ENCODE measurements at regions of chr2 and their contacts with region 1.

Region 1: DNA sequence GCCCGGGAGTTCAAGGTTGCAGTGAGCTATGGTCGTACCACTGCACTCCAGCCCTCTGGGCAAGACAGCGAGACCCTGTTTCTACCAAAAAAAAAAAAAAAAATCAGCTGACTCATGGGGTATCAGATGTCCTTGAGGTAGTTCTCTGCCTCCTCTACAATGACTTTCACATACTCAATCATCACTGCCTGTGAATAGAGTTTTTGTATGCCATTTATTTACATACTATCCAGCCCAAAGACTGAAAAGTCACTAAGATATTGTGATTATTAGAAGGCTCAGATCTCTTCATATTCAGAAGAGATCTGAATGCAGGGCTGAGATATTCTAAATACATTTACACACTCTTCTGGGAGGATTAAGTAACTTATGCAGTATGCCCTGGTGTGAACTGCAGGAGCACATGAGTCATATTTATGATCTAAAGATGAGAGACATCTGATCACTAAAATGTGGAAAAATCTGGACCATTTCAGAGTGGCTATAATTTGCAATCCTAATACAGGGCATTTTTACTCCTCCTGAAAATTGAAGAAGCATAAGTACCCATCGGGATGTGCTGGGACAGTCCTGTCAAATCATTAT is 38.9 kb downstream of the KLF7 start:
- DNase-seq: no peak
- ATAC-seq: no peak
- H3K4me3 ChIP-seq: no peak overlapping the region
- H3K4me3 Mint-ChIP-seq: no peak overlapping the region
- H3K27ac ChIP-seq: no peak overlapping the region
- H3K27ac Mint-ChIP-seq: no peak overlapping the region
- H3K4me1 ChIP-seq: peaks cover 11% of the 10 kb centered on the region
- H3K4me1 Mint-ChIP-seq: peaks cover 60% of the 10 kb centered on the region
- H3K27me3 ChIP-seq: no peaks in the 10 kb centered on the region
- H3K27me3 Mint-ChIP-seq: no peaks in the 10 kb centered on the region
- CTCF ChIP-seq: no peak

Region 2: GRCh38 chr2:207091176-207091575 is 35.6 kb before region 1 on chr2:
- CTCF ChIA-PET with region 1: no interaction called
- POLR2A ChIA-PET with region 1: no interaction called
- intact Hi-C with region 1: loop called in 1 of 2 experiments (anchors 5 kb)
- DNase-seq: no peak
- ATAC-seq: no peak
- H3K4me3 ChIP-seq: no peak overlapping the region
- H3K4me3 Mint-ChIP-seq: no peak overlapping the region
- H3K27ac ChIP-seq: no peak overlapping the region
- H3K27ac Mint-ChIP-seq: no peak overlapping the region
- H3K4me1 ChIP-seq: peaks cover 27% of the 10 kb centered on the region
- H3K4me1 Mint-ChIP-seq: peaks cover 45% of the 10 kb centered on the region
- H3K27me3 ChIP-seq: no peaks in the 10 kb centered on the region
- H3K27me3 Mint-ChIP-seq: no peaks in the 10 kb centered on the region
- CTCF ChIP-seq: no peak

Region 3: GRCh38 chr2:207265869-207266268 is 139.1 kb after region 1 on chr2:
- CTCF ChIA-PET with region 1: no interaction called
- POLR2A ChIA-PET with region 1: no interaction called
- intact Hi-C with region 1: no loop called
- DNase-seq: no peak
- ATAC-seq: no peak
- H3K4me3 ChIP-seq: no peak overlapping the region
- H3K4me3 Mint-ChIP-seq: no peak overlapping the region
- H3K27ac ChIP-seq: no peak overlapping the region
- H3K27ac Mint-ChIP-seq: no peak overlapping the region
- H3K4me1 ChIP-seq: no peaks in the 10 kb centered on the region
- H3K4me1 Mint-ChIP-seq: no peaks in the 10 kb centered on the region
- H3K27me3 ChIP-seq: no peaks in the 10 kb centered on the region
- H3K27me3 Mint-ChIP-seq: no peaks in the 10 kb centered on the region
- CTCF ChIP-seq: no peak

Region 4: DNA sequence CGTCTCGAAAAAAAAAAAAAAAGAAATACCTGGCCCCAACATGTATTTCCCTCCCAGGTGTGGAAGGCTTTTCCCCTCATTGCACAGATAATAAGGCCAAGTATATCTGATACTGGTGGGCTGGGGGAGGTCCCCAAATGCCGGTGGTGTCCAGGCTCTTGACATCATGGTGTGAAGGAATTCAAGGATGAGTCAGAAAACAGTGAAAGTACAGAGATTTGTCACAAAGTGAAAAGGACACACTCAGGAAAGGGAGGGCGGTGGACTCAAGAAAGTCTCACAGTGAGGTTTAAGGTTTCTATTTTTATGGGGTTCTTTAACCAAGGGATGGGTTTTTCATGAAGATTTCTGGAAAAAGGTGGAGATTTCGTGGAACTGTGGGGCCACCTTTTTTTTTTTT is 680.7 kb after region 1 on chr2:
- CTCF ChIA-PET with region 1: no interaction called
- POLR2A ChIA-PET with region 1: no interaction called
- intact Hi-C with region 1: no loop called
- DNase-seq: no peak
- ATAC-seq: no peak
- H3K4me3 ChIP-seq: no peak overlapping the region
- H3K4me3 Mint-ChIP-seq: no peak overlapping the region
- H3K27ac ChIP-seq: no peak overlapping the region
- H3K27ac Mint-ChIP-seq: no peak overlapping the region
- H3K4me1 ChIP-seq: no peaks in the 10 kb centered on the region
- H3K4me1 Mint-ChIP-seq: no peaks in the 10 kb centered on the region
- H3K27me3 ChIP-seq: no peaks in the 10 kb centered on the region
- H3K27me3 Mint-ChIP-seq: no peaks in the 10 kb centered on the region
- CTCF ChIP-seq: no peak